Gastrocnemius medialis (tissue), 4 donors: ENCODE measurements at regions of chr2 and their contacts with region 1.

Region 1: GRCh38 chr2:38498045-38498481 is 104.7 kb downstream of the HNRNPLL start:
- DNase-seq: no peak
- ATAC-seq: no peak
- H3K4me3 ChIP-seq: no peak overlapping the region
- H3K27ac ChIP-seq: peak overlapping the region; percentile 78 to 93 (median 86)
- H3K4me1 ChIP-seq: peaks cover 54 to 66% of the 10 kb centered on the region in 2 donors
- H3K27me3 ChIP-seq: no peaks in the 10 kb centered on the region
- CTCF ChIP-seq: no peak
- POLR2A ChIP-seq: no peak

Region 2: DNA sequence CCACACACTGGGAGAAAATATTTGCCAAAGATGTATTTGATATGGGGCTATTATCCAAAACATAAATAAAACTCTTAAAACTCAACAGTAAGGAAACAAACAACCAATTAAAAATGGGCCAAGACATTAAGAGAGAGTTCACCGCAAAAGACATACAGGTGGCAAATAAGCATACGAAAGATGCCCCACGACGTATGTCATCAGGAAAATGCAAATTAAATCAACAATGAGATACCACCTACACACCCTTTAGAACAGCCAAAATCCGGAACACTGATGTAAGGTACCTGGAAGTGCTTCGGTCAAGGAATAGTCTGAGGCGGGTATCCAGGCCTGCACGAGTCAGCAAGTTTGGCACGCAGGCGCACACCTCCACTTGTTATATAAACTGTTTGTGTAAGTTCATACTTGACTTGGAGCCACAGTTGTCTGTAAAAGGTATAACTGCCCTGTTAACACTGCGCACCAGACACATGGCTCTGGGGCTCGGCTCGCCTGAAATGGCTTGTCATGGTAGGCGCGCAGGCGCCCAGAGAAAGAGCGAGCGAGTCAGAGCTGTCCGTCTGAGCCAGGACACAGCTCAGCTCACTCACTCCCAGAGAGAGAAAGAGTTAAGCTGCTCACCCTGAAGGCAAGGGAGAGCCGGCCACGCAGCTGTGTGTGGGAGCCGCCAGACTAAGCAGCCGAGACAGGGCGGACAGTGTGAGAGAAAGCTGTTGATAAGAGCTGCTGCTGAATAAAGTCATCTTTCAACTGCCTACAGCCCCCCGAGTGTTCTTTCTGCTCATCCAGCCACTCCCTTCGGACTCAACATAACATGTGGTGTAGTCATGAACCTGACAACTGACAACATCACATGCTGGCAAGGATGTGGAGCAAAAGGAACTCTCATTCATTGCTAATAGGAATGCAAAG is 17.4 kb after region 1 on chr2:
- in situ Hi-C with region 1: no loop called
- intact Hi-C with region 1: loop called (anchors 2 kb)
- DNase-seq: peak; percentile 71 to 84
- ATAC-seq: peak; percentile 80 to 81
- H3K4me3 ChIP-seq: peak overlapping the region; percentile 6 to 49 (median 38)
- H3K27ac ChIP-seq: peak overlapping the region; percentile 86 to 93 (median 89)
- H3K4me1 ChIP-seq: peaks cover 12 to 32% of the 10 kb centered on the region in 2 donors
- H3K27me3 ChIP-seq: no peaks in the 10 kb centered on the region
- CTCF ChIP-seq: no peak
- POLR2A ChIP-seq: peak; percentile 42 to 62

Region 3: GRCh38 chr2:38528008-38528442 is 30.0 kb after region 1 on chr2:
- in situ Hi-C with region 1: no loop called
- intact Hi-C with region 1: loop called (anchors 5 kb)
- DNase-seq: no peak
- ATAC-seq: peak; percentile 12 to 56
- H3K4me3 ChIP-seq: peak overlapping the region; percentile 49 to 60 (median 56)
- H3K27ac ChIP-seq: peak overlapping the region; percentile 72 to 91 (median 80)
- H3K4me1 ChIP-seq: peaks cover 31 to 37% of the 10 kb centered on the region in 2 donors
- H3K27me3 ChIP-seq: no peaks in the 10 kb centered on the region
- CTCF ChIP-seq: no peak
- POLR2A ChIP-seq: no peak

Region 4: DNA sequence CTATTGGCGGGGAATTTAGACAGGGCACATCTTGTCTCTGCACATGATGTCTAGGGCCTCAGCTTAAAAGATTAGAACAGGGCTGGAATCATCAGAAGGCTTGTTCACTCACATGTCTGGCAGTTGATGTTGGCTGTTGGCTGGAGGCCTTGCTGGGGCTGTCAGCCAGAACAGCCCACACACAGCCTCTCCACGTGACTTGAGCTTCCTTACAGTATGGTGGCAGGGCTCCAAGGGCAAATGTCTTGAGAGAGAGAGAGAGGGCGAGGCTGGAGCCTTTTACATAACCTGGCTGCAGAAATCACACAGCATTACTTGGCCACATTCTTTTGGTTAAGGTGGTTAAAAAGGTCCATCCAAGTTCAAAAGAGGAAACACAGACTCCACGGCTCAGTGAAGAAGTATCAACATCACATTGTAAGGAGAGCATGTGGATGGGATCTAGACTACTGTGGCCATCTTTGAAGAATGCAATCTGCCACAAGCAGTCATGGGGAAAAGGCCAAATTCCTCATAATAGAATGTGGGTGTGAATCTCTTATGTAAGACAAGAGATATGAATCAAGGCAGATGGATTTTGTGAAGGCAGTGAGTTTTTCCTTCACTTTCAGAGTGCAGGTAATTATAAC is 222.7 kb after region 1 on chr2:
- in situ Hi-C with region 1: no loop called
- intact Hi-C with region 1: no loop called
- DNase-seq: peak; percentile 79 to 88
- ATAC-seq: peak; percentile 76 to 91
- H3K4me3 ChIP-seq: no peak overlapping the region
- H3K27ac ChIP-seq: peak overlapping the region; percentile 76 to 90 (median 88)
- H3K4me1 ChIP-seq: peaks cover 29 to 32% of the 10 kb centered on the region in 2 donors
- H3K27me3 ChIP-seq: no peaks in the 10 kb centered on the region
- CTCF ChIP-seq: no peak
- POLR2A ChIP-seq: no peak